ENCODE measurements at regions of chr7 and their contacts with region 1.

Region 1: DNA sequence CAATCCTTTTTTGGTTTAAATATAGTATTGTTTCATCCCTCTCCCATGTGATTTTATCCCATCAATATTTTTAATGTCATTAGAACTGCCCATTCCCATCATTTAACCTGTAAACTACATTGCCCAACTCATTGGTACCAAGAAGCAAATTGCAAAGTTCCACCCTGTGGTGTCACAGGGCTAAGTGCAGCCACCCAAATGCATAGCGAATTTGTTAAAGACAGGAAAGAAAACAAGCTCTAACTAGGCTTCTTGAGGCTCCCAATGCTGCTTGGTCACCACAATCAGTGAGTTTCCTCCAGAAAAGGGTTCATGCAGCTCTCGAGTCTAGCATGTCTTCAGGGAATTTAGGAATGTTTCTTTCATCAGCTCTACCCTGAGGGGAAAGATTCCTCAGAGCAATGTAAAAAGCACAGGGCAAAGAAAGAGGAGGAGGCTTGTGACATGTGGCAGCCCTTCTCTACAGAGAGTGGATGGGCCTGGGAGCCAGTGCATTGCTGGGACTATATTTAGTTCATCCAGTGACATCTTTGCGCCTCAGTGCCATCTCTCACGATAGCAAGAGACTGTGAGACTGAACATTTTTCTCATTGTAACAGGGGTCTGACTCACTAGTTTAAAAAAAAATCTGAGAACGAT is 58.1 kb downstream of the CAV1 start:
- DNase-seq: peak in 4 of 5 donors; percentile 62 to 74 (median 66)
- ATAC-seq: peak; percentile 75 to 90 (median 89)
- H3K4me3 ChIP-seq: peak overlapping the region in 5 of 12 donors; percentile 4 to 36 (median 10)
- H3K27ac ChIP-seq: peak overlapping the region; percentile 15 to 78 (median 62)
- H3K4me1 ChIP-seq: peaks cover 0 to 41% (median 23%) of the 10 kb centered on the region in 12 donors
- H3K27me3 ChIP-seq: no peaks in the 10 kb centered on the region
- CTCF ChIP-seq: no peak
- POLR2A ChIP-seq: no peak

Region 2: DNA sequence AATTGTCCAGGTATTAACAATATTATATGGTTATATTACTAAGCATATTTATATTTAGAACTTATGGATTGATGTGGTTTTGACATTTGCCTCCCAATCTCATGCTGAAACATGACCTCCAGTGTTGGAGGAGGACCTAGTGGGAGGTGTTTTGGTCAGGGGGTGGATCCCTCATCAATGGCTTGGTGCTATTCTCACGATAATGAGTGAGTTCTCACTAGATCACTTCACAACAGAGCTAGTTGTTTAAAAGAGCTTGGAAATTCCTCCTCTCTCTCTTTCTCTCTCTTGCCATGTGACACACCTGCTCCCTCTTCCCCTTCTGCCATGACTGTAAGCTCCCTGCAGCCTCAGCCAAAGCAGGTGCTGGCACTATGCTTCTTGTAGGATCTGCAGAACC is 571.3 kb before region 1 on chr7:
- intact Hi-C with region 1: no loop called
- DNase-seq: no peak
- ATAC-seq: no peak
- H3K4me3 ChIP-seq: no peak overlapping the region
- H3K27ac ChIP-seq: no peak overlapping the region
- H3K4me1 ChIP-seq: peaks cover 0 to 12% (median 0%) of the 10 kb centered on the region in 12 donors
- H3K27me3 ChIP-seq: no peaks in the 10 kb centered on the region
- CTCF ChIP-seq: no peak
- POLR2A ChIP-seq: no peak

Region 3: GRCh38 chr7:116443101-116443523 is 139.8 kb before region 1 on chr7:
- intact Hi-C with region 1: loop called in 6 of 10 experiments (anchors 5 to 10 kb)
- DNase-seq: no peak
- ATAC-seq: peak in 2 of 4 donors; percentile 27 to 40
- H3K4me3 ChIP-seq: no peak overlapping the region
- H3K27ac ChIP-seq: peak overlapping the region in 5 of 12 donors; percentile 3 to 81 (median 59)
- H3K4me1 ChIP-seq: peaks cover 3 to 63% (median 40%) of the 10 kb centered on the region in 12 donors
- H3K27me3 ChIP-seq: no peaks in the 10 kb centered on the region
- CTCF ChIP-seq: no peak
- POLR2A ChIP-seq: no peak

Measured in heart left ventricle (tissue), 16 donors.